CD4-positive, alpha-beta T cell (primary cell): ENCODE measurements at regions of chr6 and their contacts with region 1.

Region 1: GRCh38 chr6:170554013-170554795 is at the start of gene TBP:
- DNase-seq: peak; percentile 91 to 99 (median 96)
- ATAC-seq: peak; percentile 90
- H3K4me3 ChIP-seq: peak within 1 kb of the TSS; percentile 96
- H3K4me3 Mint-ChIP-seq: no peak within 1 kb of the TSS
- H3K27ac ChIP-seq: peak within 1 kb of the TSS; percentile 93
- H3K27ac Mint-ChIP-seq: no peak within 1 kb of the TSS
- H3K4me1 ChIP-seq: peaks cover 34% of the 10 kb centered on the region
- H3K4me1 Mint-ChIP-seq: peaks cover 27% of the 10 kb centered on the region
- H3K27me3 ChIP-seq: no peaks in the 10 kb centered on the region
- H3K27me3 Mint-ChIP-seq: no peaks in the 10 kb centered on the region
- CTCF ChIP-seq: no peak
- total RNA-seq, gene TBP: 12.6 to 14.1 TPM

Region 2: GRCh38 chr6:169723200-169723909 is 830.8 kb before region 1 on chr6:
- CTCF ChIA-PET with region 1: no interaction called
- POLR2A ChIA-PET with region 1: interaction called, 39 read pairs
- intact Hi-C with region 1: loop called in 1 of 2 experiments (anchors 10 kb)
- DNase-seq: peak; percentile 47 to 85 (median 64)
- ATAC-seq: peak; percentile 38
- H3K4me3 ChIP-seq: peak overlapping the region; percentile 79
- H3K4me3 Mint-ChIP-seq: peak overlapping the region; percentile 90
- H3K27ac ChIP-seq: peak overlapping the region; percentile 66 to 81
- H3K27ac Mint-ChIP-seq: peak overlapping the region; percentile 94
- H3K4me1 ChIP-seq: peaks cover 17% of the 10 kb centered on the region
- H3K4me1 Mint-ChIP-seq: peaks cover 58% of the 10 kb centered on the region
- H3K27me3 ChIP-seq: no peaks in the 10 kb centered on the region
- H3K27me3 Mint-ChIP-seq: no peaks in the 10 kb centered on the region
- CTCF ChIP-seq: no peak

Region 3: DNA sequence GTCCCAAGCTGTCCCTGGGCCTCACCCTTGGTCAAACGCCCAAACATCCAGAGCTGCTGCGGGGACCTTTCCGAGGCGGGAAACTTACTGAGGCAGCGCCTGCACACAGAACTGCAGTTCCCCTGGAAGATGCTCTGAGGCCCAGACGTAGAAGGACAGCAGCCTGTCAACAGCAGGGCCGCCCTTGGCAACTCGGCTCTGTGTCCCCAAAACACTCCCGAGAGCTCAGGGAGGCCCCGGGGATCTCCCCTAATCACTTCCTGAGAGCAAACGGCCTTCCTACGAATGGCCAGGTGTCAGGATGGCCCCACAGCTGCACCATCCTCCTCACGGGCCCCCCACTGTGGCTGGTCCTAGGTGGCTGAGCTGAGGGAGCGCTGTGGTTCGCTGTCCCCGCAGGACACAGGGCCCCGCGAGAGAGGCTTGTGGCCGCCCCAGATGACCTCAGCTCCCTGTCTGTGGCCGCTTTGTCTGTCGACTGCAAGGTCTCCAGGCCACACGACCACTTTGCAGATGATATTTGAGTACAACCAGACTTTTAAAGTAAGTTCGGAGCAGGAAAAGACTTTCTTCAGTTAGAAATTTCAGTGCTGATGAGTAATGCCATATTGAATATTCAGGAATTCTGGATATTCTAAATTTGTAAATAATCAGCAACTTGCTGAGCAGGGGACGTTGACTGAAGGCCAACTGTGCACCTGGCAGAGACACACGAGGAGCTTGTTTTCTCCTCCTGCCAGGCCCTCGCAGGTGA is 309.3 kb before region 1 on chr6:
- CTCF ChIA-PET with region 1: no interaction called
- POLR2A ChIA-PET with region 1: no interaction called
- intact Hi-C with region 1: no loop called
- DNase-seq: no peak
- ATAC-seq: no peak
- H3K4me3 ChIP-seq: no peak overlapping the region
- H3K4me3 Mint-ChIP-seq: no peak overlapping the region
- H3K27ac ChIP-seq: no peak overlapping the region
- H3K27ac Mint-ChIP-seq: no peak overlapping the region
- H3K4me1 ChIP-seq: no peaks in the 10 kb centered on the region
- H3K4me1 Mint-ChIP-seq: no peaks in the 10 kb centered on the region
- H3K27me3 ChIP-seq: peaks cover 0 to 2% of the 10 kb centered on the region in 2 experiments
- H3K27me3 Mint-ChIP-seq: no peaks in the 10 kb centered on the region
- CTCF ChIP-seq: no peak

Region 4: GRCh38 chr6:170306324-170307079 is 247.7 kb before region 1 on chr6 and contains the start of gene FAM120B:
- CTCF ChIA-PET with region 1: no interaction called
- POLR2A ChIA-PET with region 1: interaction called, 5 read pairs
- intact Hi-C with region 1: loop called in 1 of 2 experiments (anchors 5 kb)
- DNase-seq: peak; percentile 91 to 99 (median 95)
- ATAC-seq: peak; percentile 95
- H3K4me3 ChIP-seq: peak within 1 kb of the TSS; percentile 91
- H3K4me3 Mint-ChIP-seq: peak within 1 kb of the TSS; percentile 93
- H3K27ac ChIP-seq: peak within 1 kb of the TSS; percentile 76 to 80
- H3K27ac Mint-ChIP-seq: peak within 1 kb of the TSS; percentile 87
- H3K4me1 ChIP-seq: peaks cover 37% of the 10 kb centered on the region
- H3K4me1 Mint-ChIP-seq: peaks cover 51% of the 10 kb centered on the region
- H3K27me3 ChIP-seq: no peaks in the 10 kb centered on the region
- H3K27me3 Mint-ChIP-seq: peaks cover 22% of the 10 kb centered on the region
- CTCF ChIP-seq: no peak
- total RNA-seq, gene FAM120B: 24.1 to 26.7 TPM

Region 5: DNA sequence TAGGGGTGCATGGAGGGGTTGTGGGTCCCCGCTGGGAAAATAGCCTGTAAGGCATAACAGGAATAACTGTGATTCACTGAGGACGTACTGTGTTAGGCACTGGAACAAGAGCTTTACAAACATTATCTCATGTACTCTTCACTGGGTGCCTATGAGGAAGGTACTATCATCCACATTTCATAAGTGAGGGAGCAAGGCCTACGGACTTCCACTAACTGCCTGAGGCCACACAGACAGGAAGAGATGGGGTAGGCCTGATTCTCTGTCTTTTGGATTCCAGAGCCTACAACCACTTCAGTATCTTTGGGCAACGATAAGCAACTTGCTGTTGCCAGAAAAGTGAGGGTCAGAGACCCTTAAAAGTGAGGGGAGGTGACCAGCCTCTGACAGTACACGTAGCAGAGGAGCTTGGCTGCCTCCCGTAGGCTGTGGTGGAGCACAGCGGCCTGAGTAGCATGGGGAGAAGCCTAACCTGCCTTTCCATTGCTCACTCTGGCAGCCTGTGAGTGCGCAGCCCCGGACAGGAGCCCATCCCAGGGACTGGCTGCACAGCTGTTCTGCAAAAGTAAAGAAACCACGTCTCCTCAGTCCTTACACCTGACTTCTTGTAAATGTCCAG is 31.5 kb before region 1 on chr6:
- CTCF ChIA-PET with region 1: no interaction called
- POLR2A ChIA-PET with region 1: no interaction called
- intact Hi-C with region 1: no loop called
- DNase-seq: no peak
- ATAC-seq: no peak
- H3K4me3 ChIP-seq: no peak overlapping the region
- H3K4me3 Mint-ChIP-seq: no peak overlapping the region
- H3K27ac ChIP-seq: no peak overlapping the region
- H3K27ac Mint-ChIP-seq: no peak overlapping the region
- H3K4me1 ChIP-seq: no peaks in the 10 kb centered on the region
- H3K4me1 Mint-ChIP-seq: no peaks in the 10 kb centered on the region
- H3K27me3 ChIP-seq: peaks cover 2 to 5% of the 10 kb centered on the region in 2 experiments
- H3K27me3 Mint-ChIP-seq: peaks cover 18% of the 10 kb centered on the region
- CTCF ChIP-seq: no peak

Region 6: GRCh38 chr6:170542031-170542719 is 12.0 kb before region 1 on chr6:
- CTCF ChIA-PET with region 1: interaction called, 3 read pairs
- POLR2A ChIA-PET with region 1: interaction called, 23 read pairs
- intact Hi-C with region 1: no loop called
- DNase-seq: no peak
- ATAC-seq: no peak
- H3K4me3 ChIP-seq: no peak overlapping the region
- H3K4me3 Mint-ChIP-seq: no peak overlapping the region
- H3K27ac ChIP-seq: no peak overlapping the region
- H3K27ac Mint-ChIP-seq: peak overlapping the region; percentile 34
- H3K4me1 ChIP-seq: no peaks in the 10 kb centered on the region
- H3K4me1 Mint-ChIP-seq: peaks cover 19% of the 10 kb centered on the region
- H3K27me3 ChIP-seq: no peaks in the 10 kb centered on the region
- H3K27me3 Mint-ChIP-seq: no peaks in the 10 kb centered on the region
- CTCF ChIP-seq: no peak